ENCODE measurements at regions of chr5 and their contacts with region 1.

Region 1: GRCh38 chr5:57650360-57651069 is 167.9 kb upstream of the ACTBL2 start:
- DNase-seq: peak; percentile 77
- H3K4me3 Mint-ChIP-seq: no peak overlapping the region
- H3K27ac Mint-ChIP-seq: no peak overlapping the region
- H3K4me1 Mint-ChIP-seq: no peaks in the 10 kb centered on the region
- H3K27me3 Mint-ChIP-seq: no peaks in the 10 kb centered on the region
- CTCF ChIP-seq: peak; percentile 75

Region 2: GRCh38 chr5:56686337-56687195 is 963.9 kb before region 1 on chr5:
- CTCF ChIA-PET with region 1: no interaction called
- POLR2A ChIA-PET with region 1: no interaction called
- intact Hi-C with region 1: no loop called
- DNase-seq: no peak
- H3K4me3 Mint-ChIP-seq: no peak overlapping the region
- H3K27ac Mint-ChIP-seq: no peak overlapping the region
- H3K4me1 Mint-ChIP-seq: peaks cover 1% of the 10 kb centered on the region
- H3K27me3 Mint-ChIP-seq: no peaks in the 10 kb centered on the region
- CTCF ChIP-seq: no peak

Region 3: GRCh38 chr5:57298295-57298984 is 352.1 kb before region 1 on chr5:
- CTCF ChIA-PET with region 1: interaction called, 11 read pairs
- POLR2A ChIA-PET with region 1: no interaction called
- intact Hi-C with region 1: loop called (anchors 1 kb)
- DNase-seq: peak; percentile 89
- H3K4me3 Mint-ChIP-seq: no peak overlapping the region
- H3K27ac Mint-ChIP-seq: no peak overlapping the region
- H3K4me1 Mint-ChIP-seq: peaks cover 21% of the 10 kb centered on the region
- H3K27me3 Mint-ChIP-seq: no peaks in the 10 kb centered on the region
- CTCF ChIP-seq: peak; percentile 65

Region 4: DNA sequence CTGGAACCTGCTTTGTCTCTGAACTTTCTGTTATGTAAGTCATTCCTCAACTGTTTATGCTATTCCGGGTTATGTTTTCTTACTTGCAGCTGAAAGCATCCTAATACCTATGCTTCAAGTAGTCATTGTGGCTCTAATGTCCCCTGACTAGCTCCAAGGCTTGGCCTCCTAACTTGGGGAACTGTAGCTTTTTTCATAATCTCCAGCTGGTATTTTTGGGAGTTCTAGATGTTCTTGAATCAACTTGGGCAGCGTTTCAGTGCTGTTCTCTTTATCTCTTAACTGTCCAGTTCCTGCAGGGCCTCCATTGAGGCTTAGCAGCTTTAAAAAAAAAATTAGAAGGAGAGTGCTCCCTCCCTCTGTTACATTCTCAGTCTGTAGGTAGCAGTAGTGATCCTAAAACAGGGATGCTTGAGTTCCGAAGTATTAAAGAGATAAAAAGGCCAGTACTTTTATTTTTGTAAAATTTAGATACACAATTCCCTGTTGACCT is 67.9 kb before region 1 on chr5:
- CTCF ChIA-PET with region 1: interaction called, 12 read pairs
- POLR2A ChIA-PET with region 1: no interaction called
- intact Hi-C with region 1: no loop called
- DNase-seq: no peak
- H3K4me3 Mint-ChIP-seq: no peak overlapping the region
- H3K27ac Mint-ChIP-seq: no peak overlapping the region
- H3K4me1 Mint-ChIP-seq: no peaks in the 10 kb centered on the region
- H3K27me3 Mint-ChIP-seq: peaks cover 15% of the 10 kb centered on the region
- CTCF ChIP-seq: no peak

Region 5: GRCh38 chr5:57635146-57635777 is 15.3 kb before region 1 on chr5:
- CTCF ChIA-PET with region 1: interaction called, 20 read pairs
- POLR2A ChIA-PET with region 1: no interaction called
- intact Hi-C with region 1: no loop called
- DNase-seq: no peak
- H3K4me3 Mint-ChIP-seq: no peak overlapping the region
- H3K27ac Mint-ChIP-seq: no peak overlapping the region
- H3K4me1 Mint-ChIP-seq: no peaks in the 10 kb centered on the region
- H3K27me3 Mint-ChIP-seq: peaks cover 17% of the 10 kb centered on the region
- CTCF ChIP-seq: no peak

Region 6: GRCh38 chr5:57684299-57684702 is 33.8 kb after region 1 on chr5:
- CTCF ChIA-PET with region 1: interaction called, 15 read pairs
- POLR2A ChIA-PET with region 1: interaction called, 3 read pairs
- intact Hi-C with region 1: no loop called
- DNase-seq: peak; percentile 69
- H3K4me3 Mint-ChIP-seq: no peak overlapping the region
- H3K27ac Mint-ChIP-seq: no peak overlapping the region
- H3K4me1 Mint-ChIP-seq: peaks cover 34% of the 10 kb centered on the region
- H3K27me3 Mint-ChIP-seq: no peaks in the 10 kb centered on the region
- CTCF ChIP-seq: no peak

Region 7: GRCh38 chr5:57772512-57772911 is 122.0 kb after region 1 on chr5:
- CTCF ChIA-PET with region 1: interaction called, 68 read pairs
- POLR2A ChIA-PET with region 1: interaction called, 3 read pairs
- intact Hi-C with region 1: no loop called
- DNase-seq: no peak
- H3K4me3 Mint-ChIP-seq: no peak overlapping the region
- H3K27ac Mint-ChIP-seq: no peak overlapping the region
- H3K4me1 Mint-ChIP-seq: no peaks in the 10 kb centered on the region
- H3K27me3 Mint-ChIP-seq: no peaks in the 10 kb centered on the region
- CTCF ChIP-seq: no peak

Region 8: DNA sequence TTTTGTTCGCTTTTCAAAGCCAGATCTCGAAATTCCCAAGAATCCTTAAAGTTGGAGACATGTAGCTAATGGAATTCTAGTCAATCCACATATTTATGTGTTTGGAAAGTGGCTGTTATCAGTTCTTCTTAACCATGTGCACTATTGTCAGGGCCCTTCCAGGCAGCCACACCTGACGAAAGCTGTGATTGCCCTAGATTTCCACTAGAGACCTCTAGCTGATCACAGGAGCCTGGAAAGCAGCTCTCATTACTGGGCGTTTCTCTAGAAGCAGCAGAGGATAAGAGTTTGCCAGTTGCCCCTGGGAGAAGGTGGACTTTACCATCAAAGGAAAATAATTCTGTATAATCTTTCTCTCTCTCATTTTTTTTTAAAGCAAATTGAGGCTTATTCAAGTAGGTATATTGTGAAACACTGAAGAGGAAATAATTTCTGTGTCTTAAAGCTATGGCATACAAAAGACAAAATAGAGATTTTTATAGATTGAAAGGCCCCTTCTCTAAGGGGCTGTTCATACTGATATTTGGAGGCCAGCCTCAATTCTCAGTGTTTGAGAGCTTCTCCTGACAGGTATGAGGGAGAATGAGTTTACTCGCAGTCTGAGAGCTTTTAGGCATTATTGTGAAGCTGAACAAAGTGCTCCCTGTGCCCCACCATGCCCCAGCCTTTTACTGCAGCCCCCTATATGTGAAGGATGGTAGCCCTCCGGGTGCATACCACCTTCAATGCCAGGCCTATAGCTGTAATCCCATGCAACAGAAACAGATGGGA is 237.5 kb after region 1 on chr5:
- CTCF ChIA-PET with region 1: interaction called, 23 read pairs
- POLR2A ChIA-PET with region 1: no interaction called
- intact Hi-C with region 1: loop called (anchors 10 kb)
- DNase-seq: peak; percentile 76
- H3K4me3 Mint-ChIP-seq: no peak overlapping the region
- H3K27ac Mint-ChIP-seq: no peak overlapping the region
- H3K4me1 Mint-ChIP-seq: peaks cover 19% of the 10 kb centered on the region
- H3K27me3 Mint-ChIP-seq: no peaks in the 10 kb centered on the region
- CTCF ChIP-seq: peak; percentile 71

Measured in MCF 10A (cell line).